Activated CD4-positive, alpha-beta memory T cell treated with anti-CD3 and anti-CD28 coated beads for 36 hours (primary cell): ENCODE measurements at regions of chr5 and their contacts with region 1.

Region 1: GRCh38 chr5:164013077-164013670 is 507.8 kb downstream of the MAT2B start:
- DNase-seq: peak; percentile 31
- H3K4me3 Mint-ChIP-seq: no peak overlapping the region
- H3K27ac Mint-ChIP-seq: no peak overlapping the region
- H3K4me1 Mint-ChIP-seq: no peaks in the 10 kb centered on the region
- H3K27me3 Mint-ChIP-seq: no peaks in the 10 kb centered on the region

Region 2: GRCh38 chr5:164027738-164028137 is 14.6 kb after region 1 on chr5:
- CTCF ChIA-PET with region 1: no interaction called
- POLR2A ChIA-PET with region 1: no interaction called
- intact Hi-C with region 1: no loop called
- DNase-seq: no peak
- H3K4me3 Mint-ChIP-seq: no peak overlapping the region
- H3K27ac Mint-ChIP-seq: no peak overlapping the region
- H3K4me1 Mint-ChIP-seq: no peaks in the 10 kb centered on the region
- H3K27me3 Mint-ChIP-seq: no peaks in the 10 kb centered on the region

Region 3: GRCh38 chr5:165209086-165209727 is 1196.0 kb after region 1 on chr5:
- CTCF ChIA-PET with region 1: no interaction called
- POLR2A ChIA-PET with region 1: no interaction called
- intact Hi-C with region 1: loop called (anchors 5 kb)
- DNase-seq: no peak
- H3K4me3 Mint-ChIP-seq: no peak overlapping the region
- H3K27ac Mint-ChIP-seq: no peak overlapping the region
- H3K4me1 Mint-ChIP-seq: no peaks in the 10 kb centered on the region
- H3K27me3 Mint-ChIP-seq: no peaks in the 10 kb centered on the region